SK-N-SH (cell line): ENCODE measurements at regions of chr6 and their contacts with region 1.

Region 1: GRCh38 chr6:53410508-53411258 is 61.9 kb upstream of the ELOVL5 start:
- DNase-seq: peak; percentile 49
- H3K4me3 ChIP-seq: no peak overlapping the region
- H3K27ac ChIP-seq: no peak overlapping the region
- H3K4me1 ChIP-seq: peaks cover 0 to 2% of the 10 kb centered on the region in 2 experiments; a peak in 1 of 4 replicates
- H3K27me3 ChIP-seq: no peaks in the 10 kb centered on the region; the same call in 1 of the 2 replicates
- CTCF ChIP-seq: peak; percentile 64
- EP300 ChIP-seq: no peak
- RAD21 ChIP-seq: peak; percentile 83

Region 2: DNA sequence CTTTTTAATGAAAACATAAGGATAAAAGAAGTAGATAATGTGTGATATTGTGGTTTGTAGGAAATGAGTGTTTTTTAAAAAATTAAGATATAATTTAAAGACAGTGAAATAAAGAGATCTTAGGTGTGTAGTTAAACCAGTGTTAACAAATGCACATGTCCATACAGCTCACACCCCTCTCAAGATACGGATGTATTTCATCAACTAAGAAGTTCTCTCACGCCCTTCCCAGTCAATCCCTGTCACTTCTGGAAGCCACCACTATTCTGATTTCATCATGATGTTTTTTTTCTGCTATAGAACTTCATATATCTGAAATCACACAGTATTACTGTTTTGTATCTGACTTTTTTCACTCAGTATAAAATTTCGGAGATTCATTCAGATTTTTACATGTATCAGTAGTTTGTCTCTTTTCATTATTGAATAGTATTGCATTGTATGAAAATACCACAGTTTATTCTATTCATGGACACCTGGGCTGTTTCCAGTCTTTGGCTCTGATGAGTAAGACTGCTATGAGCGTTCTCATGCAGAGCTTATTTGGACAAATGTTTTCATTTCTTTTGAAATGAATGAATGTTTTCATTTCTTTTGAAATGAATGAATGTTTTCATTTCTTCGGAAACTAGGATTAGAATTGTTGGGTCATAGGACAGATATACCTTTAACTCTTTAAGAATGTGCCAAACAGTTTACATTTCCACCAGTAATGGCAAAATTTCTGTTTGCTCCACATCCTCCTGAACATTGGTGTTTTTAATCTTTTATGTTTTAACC is 12.2 kb before region 1 on chr6:
- CTCF ChIA-PET with region 1: interaction called, 17 read pairs
- POLR2A ChIA-PET with region 1: no interaction called
- DNase-seq: no peak
- H3K4me3 ChIP-seq: no peak overlapping the region
- H3K27ac ChIP-seq: no peak overlapping the region
- H3K4me1 ChIP-seq: no peaks in the 10 kb centered on the region
- H3K27me3 ChIP-seq: no peaks in the 10 kb centered on the region; the same call in 1 of the 2 replicates
- CTCF ChIP-seq: no peak
- EP300 ChIP-seq: no peak
- RAD21 ChIP-seq: no peak

Region 3: GRCh38 chr6:53432318-53433161 is 21.9 kb after region 1 on chr6:
- CTCF ChIA-PET with region 1: interaction called, 10 read pairs
- POLR2A ChIA-PET with region 1: no interaction called
- DNase-seq: no peak
- H3K4me3 ChIP-seq: no peak overlapping the region
- H3K27ac ChIP-seq: no peak overlapping the region
- H3K4me1 ChIP-seq: no peaks in the 10 kb centered on the region
- H3K27me3 ChIP-seq: no peaks in the 10 kb centered on the region; the same call in 1 of the 2 replicates
- CTCF ChIP-seq: no peak
- EP300 ChIP-seq: no peak
- RAD21 ChIP-seq: no peak

Region 4: GRCh38 chr6:53484476-53485280 is 74.0 kb after region 1 on chr6:
- CTCF ChIA-PET with region 1: interaction called, 19 read pairs
- POLR2A ChIA-PET with region 1: no interaction called
- DNase-seq: peak; percentile 27
- H3K4me3 ChIP-seq: peak overlapping the region in 1 of 2 experiments; percentile 19; a peak in 1 of 4 replicates
- H3K27ac ChIP-seq: no peak overlapping the region
- H3K4me1 ChIP-seq: peaks cover 0 to 8% of the 10 kb centered on the region in 2 experiments; a peak in 2 of 4 replicates
- H3K27me3 ChIP-seq: peaks cover 17% of the 10 kb centered on the region
- CTCF ChIP-seq: peak; percentile 99
- EP300 ChIP-seq: no peak
- RAD21 ChIP-seq: peak; percentile 98